ENCODE measurements at regions of chr17 and their contacts with region 1.

Region 1: GRCh38 chr17:12744298-12744697 is 45.0 kb upstream of the ARHGAP44 start:
- DNase-seq: no peak
- H3K4me3 ChIP-seq: no peak overlapping the region
- H3K27ac ChIP-seq: no peak overlapping the region
- H3K4me1 ChIP-seq: no peaks in the 10 kb centered on the region
- H3K27me3 ChIP-seq: peaks cover 21% of the 10 kb centered on the region
- CTCF ChIP-seq: no peak

Region 2: GRCh38 chr17:12256380-12256995 is 487.8 kb before region 1 on chr17:
- CTCF ChIA-PET with region 1: no interaction called
- POLR2A ChIA-PET with region 1: no interaction called
- intact Hi-C with region 1: loop called (anchors 5 kb)
- DNase-seq: peak in 1 of 2 experiments; percentile 16
- H3K4me3 ChIP-seq: no peak overlapping the region
- H3K27ac ChIP-seq: no peak overlapping the region
- H3K4me1 ChIP-seq: no peaks in the 10 kb centered on the region
- H3K27me3 ChIP-seq: peaks cover 25% of the 10 kb centered on the region
- CTCF ChIP-seq: peak; percentile 72

Measured in PC-9 (cell line).